ENCODE measurements at regions of chr1 and their contacts with region 1.

Region 1: DNA sequence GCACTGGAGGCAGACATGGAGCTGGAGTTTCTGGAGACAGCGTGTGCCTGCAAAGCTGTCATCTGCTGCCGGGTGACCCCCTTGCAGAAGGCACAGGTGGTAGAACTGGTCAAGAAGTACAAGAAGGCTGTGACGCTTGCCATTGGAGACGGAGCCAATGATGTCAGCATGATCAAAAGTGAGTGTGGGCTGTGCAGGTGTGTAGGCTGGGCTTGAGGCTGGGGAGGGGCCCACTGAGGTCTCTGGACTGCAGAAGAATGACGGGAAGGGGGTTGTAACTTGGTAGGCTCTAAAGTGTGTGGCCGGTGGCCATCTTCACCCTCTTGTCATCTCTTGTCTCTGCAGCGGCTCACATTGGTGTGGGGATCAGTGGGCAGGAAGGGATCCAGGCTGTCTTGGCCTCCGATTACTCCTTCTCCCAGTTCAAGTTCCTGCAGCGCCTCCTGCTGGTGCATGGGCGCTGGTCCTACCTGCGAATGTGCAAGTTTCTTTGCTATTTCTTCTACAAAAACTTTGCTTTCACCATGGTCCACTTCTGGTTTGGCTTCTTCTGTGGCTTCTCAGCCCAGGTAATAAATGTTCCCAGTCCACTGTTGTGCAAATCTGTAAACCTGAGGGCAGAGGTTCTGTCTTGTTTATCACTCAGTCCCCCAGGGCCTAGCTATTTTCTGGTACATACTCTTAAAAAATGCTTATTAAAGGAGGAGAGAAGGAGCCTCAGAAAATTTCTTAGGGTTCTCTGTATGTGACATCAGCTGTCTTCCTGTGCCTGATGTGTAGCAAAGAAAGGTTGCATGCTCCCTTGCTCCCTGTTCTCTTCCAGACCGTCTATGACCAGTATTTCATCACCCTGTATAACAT is 19.9 kb downstream of the ATP8B2 start:
- DNase-seq: no peak
- ATAC-seq: no peak
- H3K4me3 ChIP-seq: peak overlapping the region in 1 of 10 donors; percentile 28
- H3K27ac ChIP-seq: peak overlapping the region in 1 of 10 donors; percentile 40
- H3K4me1 ChIP-seq: peaks cover 0 to 37% (median 0%) of the 10 kb centered on the region in 9 donors
- H3K27me3 ChIP-seq: no peaks in the 10 kb centered on the region
- CTCF ChIP-seq: peak; percentile 4 to 66 (median 46)

Region 2: GRCh38 chr1:154442006-154442740 is 97.0 kb after region 1 on chr1:
- intact Hi-C with region 1: loop called in 1 of 10 experiments (anchors 10 kb)
- DNase-seq: no peak
- ATAC-seq: peak in 5 of 8 donors; percentile 45 to 69 (median 52)
- H3K4me3 ChIP-seq: no peak overlapping the region
- H3K27ac ChIP-seq: peak overlapping the region in 1 of 10 donors; percentile 7
- H3K4me1 ChIP-seq: peaks cover 0 to 39% (median 0%) of the 10 kb centered on the region in 9 donors
- H3K27me3 ChIP-seq: no peaks in the 10 kb centered on the region
- CTCF ChIP-seq: peak in 8 of 9 donors; percentile 21 to 54 (median 42)